ENCODE measurements at regions of chr12 and their contacts with region 1.

Region 1: DNA sequence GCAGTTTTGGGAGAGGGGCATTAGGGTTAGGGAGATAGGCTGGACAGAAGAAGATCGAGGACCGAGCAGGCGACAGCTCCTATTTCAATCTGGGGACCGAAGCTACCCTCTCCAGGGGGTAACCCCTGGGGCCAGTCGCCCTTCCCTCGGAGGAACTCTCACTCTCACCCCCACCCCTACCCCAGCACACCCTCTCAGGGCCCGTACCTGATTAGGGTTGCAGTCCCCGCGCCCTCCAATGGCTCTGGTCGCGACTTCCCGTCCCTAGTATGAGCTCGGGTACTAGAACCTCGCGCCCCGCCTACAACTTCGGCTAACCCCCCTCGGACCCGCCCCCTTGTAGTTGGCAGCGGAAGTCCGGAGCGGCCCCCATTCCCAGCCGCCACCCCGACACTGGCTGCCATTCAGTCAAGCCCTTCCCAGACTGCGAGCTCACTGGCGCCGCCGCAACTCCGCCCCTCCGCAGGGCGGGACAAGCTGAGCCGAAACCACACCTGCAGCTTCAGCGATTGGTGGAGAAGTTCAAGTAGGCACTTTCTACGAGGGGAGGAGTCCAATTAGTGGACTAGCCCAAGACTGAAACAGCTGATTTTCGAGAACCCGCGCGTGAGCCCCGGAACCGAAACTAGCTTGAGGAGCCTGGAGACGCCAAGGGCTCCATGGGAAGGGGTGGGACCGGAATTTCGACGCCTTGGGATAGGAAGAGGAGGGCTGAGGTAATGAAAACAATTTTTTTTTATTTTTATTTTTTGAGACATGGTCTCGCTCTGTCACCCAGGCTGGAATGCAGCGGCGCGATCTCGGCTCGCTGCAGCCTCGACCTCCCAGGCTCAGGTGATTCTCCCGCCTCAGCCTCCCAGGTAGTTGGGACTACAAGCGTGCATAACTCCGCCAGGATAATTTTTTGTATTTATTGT is at the start of gene STAT2:
- DNase-seq: peak; percentile 99
- ATAC-seq: peak; percentile 99
- total RNA-seq, gene STAT2: 28.3 TPM

Region 2: DNA sequence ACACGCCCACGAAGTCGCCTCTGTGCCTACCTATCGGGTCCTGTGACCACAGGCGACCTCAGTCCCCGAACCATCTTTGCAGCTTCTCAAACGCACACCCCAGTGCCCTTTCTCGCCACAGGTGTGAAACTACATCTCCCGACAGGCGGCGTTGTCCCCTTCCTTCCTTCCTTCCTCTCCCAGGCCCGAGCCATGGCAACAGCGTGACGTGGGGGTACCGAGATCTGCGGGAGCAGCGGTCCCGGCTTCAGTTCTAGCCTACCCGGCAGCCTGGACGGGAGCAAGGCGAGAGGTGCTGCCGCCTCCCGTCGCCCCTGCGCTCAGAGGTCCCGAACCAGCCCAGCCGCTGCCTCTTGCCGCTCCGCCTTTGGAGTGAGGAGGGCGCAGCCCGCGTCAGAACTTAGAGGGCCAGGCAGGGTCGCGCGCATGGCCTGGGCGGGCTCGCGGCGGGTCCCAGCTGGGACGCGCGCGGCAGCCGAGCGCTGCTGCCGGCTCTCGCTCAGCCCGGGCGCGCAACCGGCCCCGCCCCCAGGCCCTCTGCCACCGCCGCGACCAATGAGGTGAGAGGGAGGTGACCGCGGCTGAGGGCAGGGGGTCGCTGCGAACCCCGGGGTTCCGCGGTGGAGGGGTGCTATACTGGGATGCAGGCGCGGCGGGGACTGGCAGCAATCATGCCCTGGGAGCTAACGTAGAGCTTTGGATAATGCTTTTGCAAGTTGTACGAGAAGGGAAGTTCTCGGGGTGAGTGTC is 93.2 kb before region 1 on chr12 and contains the start of gene COQ10A:
- intact Hi-C with region 1: no loop called
- DNase-seq: peak; percentile 94
- ATAC-seq: peak; percentile 93
- total RNA-seq, gene COQ10A: 153 TPM

Region 3: DNA sequence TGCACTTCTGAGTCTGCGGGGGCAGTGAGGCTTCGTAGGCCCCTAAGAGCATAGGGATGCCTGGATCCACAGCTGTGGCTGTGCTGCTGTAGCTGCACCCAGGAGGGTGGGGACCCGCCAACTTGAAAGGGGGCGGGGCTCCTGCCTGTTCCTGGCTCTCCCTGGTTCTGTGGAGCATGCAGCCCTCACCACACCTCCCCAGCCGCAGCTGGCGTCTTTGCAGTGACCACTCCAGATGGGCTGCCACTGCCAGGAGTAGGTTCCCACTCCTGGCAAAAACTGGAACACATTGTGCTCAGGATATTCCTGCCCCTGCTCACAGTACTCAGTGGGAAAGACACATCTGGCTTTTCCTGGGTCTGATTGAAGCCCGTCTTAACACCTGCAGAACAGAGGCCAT is 53.3 kb after region 1 on chr12:
- intact Hi-C with region 1: loop called (anchors 10 kb)
- DNase-seq: no peak
- ATAC-seq: peak; percentile 22

Region 4: GRCh38 chr12:56468216-56469006 is 108.3 kb after region 1 on chr12 and contains the start of gene SPRYD4:
- intact Hi-C with region 1: loop called (anchors 10 kb)
- DNase-seq: peak; percentile 96
- ATAC-seq: peak; percentile 98
- total RNA-seq, gene SPRYD4: 2.9 TPM

Measured in Right ventricle myocardium superior (tissue), 1 donor.